Heart right ventricle (tissue), 16 donors: ENCODE measurements at regions of chr10 and their contacts with region 1.

Region 1: GRCh38 chr10:25226775-25227682 is 52.2 kb downstream of the GPR158 start:
- DNase-seq: peak; percentile 13 to 16
- ATAC-seq: peak in 3 of 8 donors; percentile 65 to 72 (median 71)
- H3K4me3 ChIP-seq: no peak overlapping the region
- H3K27ac ChIP-seq: no peak overlapping the region
- H3K4me1 ChIP-seq: no peaks in the 10 kb centered on the region
- H3K27me3 ChIP-seq: no peaks in the 10 kb centered on the region
- CTCF ChIP-seq: peak; percentile 38 to 77 (median 60)

Region 2: GRCh38 chr10:24617771-24618391 is 609.1 kb before region 1 on chr10:
- intact Hi-C with region 1: loop called in 2 of 10 experiments (anchors 10 kb)
- DNase-seq: peak; percentile 44 to 63
- ATAC-seq: peak in 7 of 8 donors; percentile 38 to 80 (median 71)
- H3K4me3 ChIP-seq: no peak overlapping the region
- H3K27ac ChIP-seq: no peak overlapping the region
- H3K4me1 ChIP-seq: peaks cover under 1 to 13% (median 10%) of the 10 kb centered on the region in 9 donors
- H3K27me3 ChIP-seq: no peaks in the 10 kb centered on the region
- CTCF ChIP-seq: peak; percentile 60 to 90 (median 83)

Region 3: GRCh38 chr10:25174461-25175230 is 52.4 kb before region 1 on chr10 and contains the start of gene GPR158:
- intact Hi-C with region 1: no loop called
- DNase-seq: peak; percentile 82 to 91
- ATAC-seq: peak; percentile 89 to 96 (median 93)
- H3K4me3 ChIP-seq: peak within 1 kb of the TSS; percentile 41 to 59 (median 49)
- H3K27ac ChIP-seq: no peak within 1 kb of the TSS
- H3K4me1 ChIP-seq: peaks cover 3 to 24% (median 18%) of the 10 kb centered on the region in 9 donors
- H3K27me3 ChIP-seq: peaks cover 7 to 90% (median 64%) of the 10 kb centered on the region in 7 donors
- CTCF ChIP-seq: no peak
- total RNA-seq, gene GPR158: 0.04 TPM in 1 of 10 donors, not detected in the others